Right ventricle myocardium inferior (tissue), 1 donor: ENCODE measurements at regions of chr5 and their contacts with region 1.

Region 1: DNA sequence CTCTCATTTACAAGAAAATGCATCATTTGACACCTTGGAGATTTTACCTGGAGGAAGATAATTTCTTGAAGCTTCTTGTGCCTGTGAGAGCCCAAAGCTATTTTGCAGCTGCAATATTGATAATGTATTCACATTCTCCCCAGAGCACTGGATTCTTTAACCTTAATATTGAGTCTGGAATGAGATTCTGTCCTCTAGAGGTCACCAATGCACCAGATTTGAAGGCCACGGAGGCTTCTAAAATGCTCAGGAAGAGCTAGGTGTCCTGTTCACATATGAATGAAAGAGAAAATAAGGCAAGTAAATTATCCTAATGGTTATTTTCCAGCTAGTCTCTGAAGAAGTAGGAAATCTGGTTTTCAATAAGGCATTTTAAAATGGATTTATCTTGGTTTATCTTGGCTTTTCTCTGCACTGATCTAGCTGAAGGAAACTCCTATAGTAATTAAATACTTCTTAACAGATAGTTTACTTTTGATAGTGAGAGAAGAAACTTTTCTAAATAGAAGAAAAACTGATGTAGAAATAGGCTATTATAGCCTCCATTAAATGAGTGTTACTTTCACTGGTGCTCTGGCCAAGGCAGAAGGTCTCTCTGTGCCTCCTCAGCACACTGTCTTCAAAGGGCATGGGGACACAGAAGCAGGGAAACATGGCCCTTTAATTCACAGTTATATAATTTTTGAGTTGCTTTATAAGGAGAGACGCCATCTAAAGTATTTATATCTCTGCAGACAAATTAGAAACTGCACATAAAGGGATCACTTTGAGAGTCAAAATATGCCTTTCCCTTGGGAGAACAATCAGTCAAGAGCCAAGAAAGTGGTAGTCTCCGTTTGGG is 297.0 kb upstream of the ACTBL2 start:
- DNase-seq: no peak
- ATAC-seq: peak; percentile 79

Region 2: DNA sequence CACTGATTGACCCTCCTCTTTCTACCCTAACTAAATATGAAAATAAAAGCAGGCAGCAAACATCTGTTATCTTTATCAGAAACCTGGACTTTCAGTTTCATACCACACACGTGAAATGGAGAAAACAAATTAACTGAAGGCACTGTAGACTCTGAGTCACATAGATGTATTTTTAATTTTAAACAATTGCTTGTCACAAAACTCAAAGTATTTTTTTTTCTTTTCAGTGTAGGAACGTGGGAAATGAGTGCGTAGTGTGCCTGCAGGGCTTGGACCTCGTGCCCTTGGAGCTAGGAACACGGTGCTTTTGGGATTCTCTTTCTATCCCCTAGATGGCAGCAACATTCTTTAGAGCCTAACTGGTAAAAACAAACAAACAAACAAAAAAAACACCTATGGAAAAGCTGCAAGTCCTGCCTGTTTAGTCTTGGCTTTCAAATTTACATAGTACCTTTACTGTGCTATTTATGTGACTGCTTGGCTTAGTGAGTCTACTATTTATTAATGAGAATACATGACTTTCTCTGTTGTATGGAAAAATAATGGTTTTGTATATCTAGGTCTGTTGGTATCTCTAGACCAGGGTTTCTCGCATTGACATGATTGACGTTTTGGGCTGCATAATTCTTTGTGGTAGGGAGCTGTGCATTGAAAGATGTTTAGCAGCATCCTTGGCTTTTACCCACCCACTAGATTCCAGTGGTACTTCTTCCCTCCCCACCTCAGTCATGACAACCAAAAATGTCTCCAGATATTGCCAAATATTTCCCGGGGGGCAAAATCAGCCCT is 280.1 kb before region 1 on chr5:
- intact Hi-C with region 1: loop called (anchors 2 kb)
- DNase-seq: no peak
- ATAC-seq: peak; percentile 59

Region 3: DNA sequence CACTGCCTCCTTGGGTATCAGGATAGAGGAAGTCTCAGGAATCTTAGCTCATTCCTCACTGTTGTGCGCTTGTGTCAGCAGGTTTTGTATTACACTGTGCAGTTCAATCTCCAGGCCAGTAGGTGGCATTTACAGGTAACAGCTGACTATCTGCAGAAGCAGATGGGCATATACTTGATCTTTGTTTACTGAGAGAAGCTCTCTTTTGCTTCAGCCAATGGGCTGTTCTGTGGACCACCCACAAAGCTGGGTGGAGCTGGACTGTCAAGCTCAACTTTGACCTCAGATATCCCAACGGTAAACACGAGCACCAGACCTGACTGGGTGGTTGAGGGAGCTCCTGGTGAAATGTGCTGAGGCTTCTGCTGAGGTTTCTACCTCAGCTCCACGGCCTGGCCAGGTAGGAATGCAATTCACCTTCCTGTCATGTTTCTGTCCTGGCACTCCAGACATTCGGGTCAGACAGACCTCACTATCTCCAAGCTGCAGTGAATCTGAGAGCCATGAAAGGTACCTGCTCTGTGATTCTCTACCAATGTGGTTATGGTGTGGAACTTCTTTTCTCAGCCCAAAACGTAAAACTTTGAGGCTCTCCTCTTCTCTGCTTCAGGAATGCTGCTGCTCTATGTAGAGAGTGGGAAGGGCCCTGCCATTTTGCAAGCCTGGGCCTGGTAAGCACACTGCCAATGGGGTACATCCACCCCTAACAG is 129.1 kb before region 1 on chr5:
- intact Hi-C with region 1: loop called (anchors 5 kb)
- DNase-seq: no peak
- ATAC-seq: no peak

Region 4: GRCh38 chr5:57703721-57704120 is 75.9 kb before region 1 on chr5:
- intact Hi-C with region 1: loop called (anchors 5 kb)
- DNase-seq: no peak
- ATAC-seq: no peak

Region 5: DNA sequence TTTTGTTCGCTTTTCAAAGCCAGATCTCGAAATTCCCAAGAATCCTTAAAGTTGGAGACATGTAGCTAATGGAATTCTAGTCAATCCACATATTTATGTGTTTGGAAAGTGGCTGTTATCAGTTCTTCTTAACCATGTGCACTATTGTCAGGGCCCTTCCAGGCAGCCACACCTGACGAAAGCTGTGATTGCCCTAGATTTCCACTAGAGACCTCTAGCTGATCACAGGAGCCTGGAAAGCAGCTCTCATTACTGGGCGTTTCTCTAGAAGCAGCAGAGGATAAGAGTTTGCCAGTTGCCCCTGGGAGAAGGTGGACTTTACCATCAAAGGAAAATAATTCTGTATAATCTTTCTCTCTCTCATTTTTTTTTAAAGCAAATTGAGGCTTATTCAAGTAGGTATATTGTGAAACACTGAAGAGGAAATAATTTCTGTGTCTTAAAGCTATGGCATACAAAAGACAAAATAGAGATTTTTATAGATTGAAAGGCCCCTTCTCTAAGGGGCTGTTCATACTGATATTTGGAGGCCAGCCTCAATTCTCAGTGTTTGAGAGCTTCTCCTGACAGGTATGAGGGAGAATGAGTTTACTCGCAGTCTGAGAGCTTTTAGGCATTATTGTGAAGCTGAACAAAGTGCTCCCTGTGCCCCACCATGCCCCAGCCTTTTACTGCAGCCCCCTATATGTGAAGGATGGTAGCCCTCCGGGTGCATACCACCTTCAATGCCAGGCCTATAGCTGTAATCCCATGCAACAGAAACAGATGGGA is 108.4 kb after region 1 on chr5:
- intact Hi-C with region 1: loop called (anchors 2 kb)
- DNase-seq: no peak
- ATAC-seq: peak; percentile 78

Region 6: DNA sequence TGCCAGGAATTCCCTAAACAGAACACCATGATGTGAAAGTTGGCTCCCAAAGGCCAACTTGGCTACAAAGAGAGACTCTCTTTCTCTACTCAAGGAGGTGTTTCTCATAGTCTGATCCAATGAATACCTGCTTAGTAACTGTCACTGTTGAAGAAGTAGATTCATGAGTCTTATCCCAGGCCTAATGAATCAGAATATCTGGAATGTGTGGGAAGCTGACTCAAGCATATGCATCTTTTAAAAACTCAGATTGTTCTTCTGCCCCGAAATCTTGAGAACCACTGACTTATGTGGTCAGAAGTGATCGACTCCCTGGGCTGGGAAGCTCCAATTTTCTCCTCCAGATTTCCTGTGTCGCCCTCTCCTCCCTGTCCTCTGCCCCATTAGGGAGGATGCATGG is 334.7 kb after region 1 on chr5:
- intact Hi-C with region 1: no loop called
- DNase-seq: no peak
- ATAC-seq: no peak